PC-9 (cell line): ENCODE measurements at regions of chr2 and their contacts with region 1.

Region 1: GRCh38 chr2:130864830-130865800 is 28.4 kb downstream of the ARHGEF4 start:
- DNase-seq: peak; percentile 53 to 89
- H3K4me3 ChIP-seq: no peak overlapping the region
- H3K27ac ChIP-seq: peak overlapping the region; percentile 51
- H3K4me1 ChIP-seq: peaks cover 14% of the 10 kb centered on the region
- H3K27me3 ChIP-seq: no peaks in the 10 kb centered on the region
- CTCF ChIP-seq: no peak

Region 2: DNA sequence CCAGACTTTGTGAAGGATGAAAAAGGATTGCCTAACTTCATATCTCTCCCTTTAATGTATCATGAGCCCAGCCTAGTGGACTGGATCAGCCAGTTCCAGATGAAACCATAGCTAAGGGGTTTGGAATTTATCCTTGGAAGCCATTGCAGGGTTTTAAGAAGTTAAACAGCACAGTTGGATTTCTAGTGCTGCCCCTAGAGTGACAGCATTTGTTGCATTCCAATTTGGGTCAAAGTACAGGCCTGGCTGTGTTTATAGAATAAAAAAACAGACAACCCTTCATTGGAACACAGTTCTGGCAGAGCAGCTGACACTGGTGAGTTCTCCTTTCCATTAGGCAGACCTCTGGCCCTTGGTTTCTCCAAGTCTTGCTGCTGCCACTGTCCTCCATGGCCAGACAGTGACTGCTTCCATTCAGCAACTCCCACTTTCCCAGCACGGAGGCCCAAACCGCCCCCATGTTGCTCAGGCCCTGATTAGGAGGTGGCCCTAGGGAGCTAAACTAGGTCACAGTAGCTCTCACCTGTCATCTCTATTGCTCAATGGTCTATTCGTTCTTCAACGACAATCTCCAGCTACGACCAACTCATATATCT is 1559.5 kb after region 1 on chr2:
- CTCF ChIA-PET with region 1: no interaction called
- POLR2A ChIA-PET with region 1: interaction called, 10 read pairs
- intact Hi-C with region 1: no loop called
- DNase-seq: peak in 1 of 2 experiments; percentile 85
- H3K4me3 ChIP-seq: no peak overlapping the region
- H3K27ac ChIP-seq: peak overlapping the region; percentile 14
- H3K4me1 ChIP-seq: peaks cover 88% of the 10 kb centered on the region
- H3K27me3 ChIP-seq: no peaks in the 10 kb centered on the region
- CTCF ChIP-seq: no peak